CD4-positive, alpha-beta memory T cell (primary cell): ENCODE measurements at regions of chr1 and their contacts with region 1.

Region 1: GRCh38 chr1:84781946-84782771 is 91.9 kb upstream of the SSX2IP start:
- DNase-seq: peak; percentile 71 to 78 (median 75)
- H3K4me3 ChIP-seq: peak overlapping the region in 1 of 2 donors; percentile 28
- H3K4me3 Mint-ChIP-seq: peak overlapping the region; percentile 77 to 93 (median 87)
- H3K27ac ChIP-seq: no peak overlapping the region
- H3K27ac Mint-ChIP-seq: peak overlapping the region in 5 of 7 donors; percentile 7 to 82 (median 28)
- H3K4me1 ChIP-seq: peaks cover 9% of the 10 kb centered on the region
- H3K4me1 Mint-ChIP-seq: peaks cover 8 to 32% (median 22%) of the 10 kb centered on the region in 4 donors
- H3K27me3 ChIP-seq: no peaks in the 10 kb centered on the region
- H3K27me3 Mint-ChIP-seq: peaks cover 0 to 2% of the 10 kb centered on the region in 2 donors

Region 2: GRCh38 chr1:84758968-84759491 is 23.1 kb before region 1 on chr1:
- CTCF ChIA-PET with region 1: interaction called, 14 read pairs
- POLR2A ChIA-PET with region 1: no interaction called
- intact Hi-C with region 1: no loop called
- DNase-seq: no peak
- H3K4me3 ChIP-seq: no peak overlapping the region
- H3K4me3 Mint-ChIP-seq: peak overlapping the region in 5 of 8 donors; percentile 25 to 81 (median 55)
- H3K27ac ChIP-seq: no peak overlapping the region
- H3K27ac Mint-ChIP-seq: no peak overlapping the region
- H3K4me1 ChIP-seq: no peaks in the 10 kb centered on the region
- H3K4me1 Mint-ChIP-seq: peaks cover 2 to 12% (median 5%) of the 10 kb centered on the region in 4 donors
- H3K27me3 ChIP-seq: no peaks in the 10 kb centered on the region
- H3K27me3 Mint-ChIP-seq: peaks cover 6 to 9% of the 10 kb centered on the region in 2 donors

Region 3: DNA sequence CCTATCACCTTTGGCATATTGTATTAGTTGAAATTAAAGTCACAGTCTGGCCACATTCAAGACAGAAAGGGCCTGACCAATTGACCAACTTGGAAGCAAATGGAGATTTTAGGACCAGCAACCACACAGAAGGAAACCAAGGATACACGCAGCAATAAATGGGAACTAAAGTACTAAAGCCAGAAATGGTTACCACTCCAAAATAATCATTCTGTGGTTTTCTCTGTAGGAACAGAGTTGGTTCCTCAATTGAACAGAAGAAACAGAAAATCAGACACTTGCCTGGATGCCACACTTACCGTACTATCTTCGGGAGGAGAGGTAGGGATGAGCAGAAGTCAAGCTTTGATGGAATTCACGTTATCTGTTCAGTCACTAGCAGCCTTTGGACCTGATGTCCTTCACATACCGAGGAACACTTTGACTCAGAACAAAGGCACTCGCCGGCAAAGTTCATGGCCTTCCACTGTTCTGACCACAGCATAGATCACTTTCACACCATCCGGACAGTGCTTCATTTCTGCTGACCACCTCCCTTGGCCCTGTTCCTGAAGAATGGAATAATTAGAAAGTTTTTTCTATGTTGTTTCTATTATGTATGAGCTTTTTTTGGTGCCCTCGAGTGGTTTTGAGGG is 13.9 kb after region 1 on chr1:
- CTCF ChIA-PET with region 1: interaction called, 19 read pairs
- POLR2A ChIA-PET with region 1: no interaction called
- intact Hi-C with region 1: no loop called
- DNase-seq: no peak
- H3K4me3 ChIP-seq: no peak overlapping the region
- H3K4me3 Mint-ChIP-seq: no peak overlapping the region
- H3K27ac ChIP-seq: no peak overlapping the region
- H3K27ac Mint-ChIP-seq: no peak overlapping the region
- H3K4me1 ChIP-seq: no peaks in the 10 kb centered on the region
- H3K4me1 Mint-ChIP-seq: no peaks in the 10 kb centered on the region
- H3K27me3 ChIP-seq: no peaks in the 10 kb centered on the region
- H3K27me3 Mint-ChIP-seq: peaks cover 0 to 6% of the 10 kb centered on the region in 2 donors

Region 4: GRCh38 chr1:84803604-84804003 is 21.4 kb after region 1 on chr1:
- CTCF ChIA-PET with region 1: interaction called, 13 read pairs
- POLR2A ChIA-PET with region 1: no interaction called
- intact Hi-C with region 1: no loop called
- DNase-seq: no peak
- H3K4me3 ChIP-seq: no peak overlapping the region
- H3K4me3 Mint-ChIP-seq: no peak overlapping the region
- H3K27ac ChIP-seq: no peak overlapping the region
- H3K27ac Mint-ChIP-seq: no peak overlapping the region
- H3K4me1 ChIP-seq: no peaks in the 10 kb centered on the region
- H3K4me1 Mint-ChIP-seq: peaks cover 0 to 1% (median 0%) of the 10 kb centered on the region in 4 donors
- H3K27me3 ChIP-seq: no peaks in the 10 kb centered on the region
- H3K27me3 Mint-ChIP-seq: peaks cover 3 to 7% of the 10 kb centered on the region in 2 donors

Region 5: DNA sequence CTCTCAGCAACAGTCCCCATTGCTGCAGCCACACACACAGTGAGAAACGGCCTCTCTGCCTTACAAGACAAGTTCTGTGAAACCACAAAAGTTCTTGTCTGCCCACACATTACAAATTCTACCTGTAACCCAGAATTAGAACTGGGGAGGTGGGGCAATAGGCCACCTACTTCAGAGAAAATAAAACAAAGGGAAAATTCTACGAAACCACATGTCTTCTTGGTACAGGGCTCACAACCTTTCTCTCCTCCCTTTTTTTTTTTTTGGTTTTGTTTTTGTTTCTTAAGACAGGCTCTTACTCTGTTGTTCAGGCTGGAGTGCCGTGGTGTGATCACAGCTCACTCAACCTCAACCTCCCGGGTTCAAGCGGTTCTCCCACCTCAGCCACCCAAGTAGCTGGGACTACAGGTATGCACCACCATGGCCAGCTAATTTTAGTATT is 80.7 kb after region 1 on chr1:
- CTCF ChIA-PET with region 1: no interaction called
- POLR2A ChIA-PET with region 1: no interaction called
- intact Hi-C with region 1: loop called (anchors 5 kb)
- DNase-seq: peak; percentile 66 to 78 (median 76)
- H3K4me3 ChIP-seq: peak overlapping the region in 1 of 2 donors; percentile 23
- H3K4me3 Mint-ChIP-seq: peak overlapping the region; percentile 75 to 89 (median 82)
- H3K27ac ChIP-seq: peak overlapping the region; percentile 40
- H3K27ac Mint-ChIP-seq: peak overlapping the region; percentile 79 to 94 (median 91)
- H3K4me1 ChIP-seq: peaks cover 33% of the 10 kb centered on the region
- H3K4me1 Mint-ChIP-seq: peaks cover 28 to 57% (median 43%) of the 10 kb centered on the region in 4 donors
- H3K27me3 ChIP-seq: no peaks in the 10 kb centered on the region
- H3K27me3 Mint-ChIP-seq: peaks cover 0 to 1% of the 10 kb centered on the region in 2 donors

Region 6: GRCh38 chr1:84936116-84936810 is 154.1 kb after region 1 on chr1:
- CTCF ChIA-PET with region 1: interaction called, 11 read pairs
- POLR2A ChIA-PET with region 1: no interaction called
- intact Hi-C with region 1: loop called (anchors 1 kb)
- DNase-seq: peak in 4 of 5 donors; percentile 52 to 62 (median 60)
- H3K4me3 ChIP-seq: no peak overlapping the region
- H3K4me3 Mint-ChIP-seq: no peak overlapping the region
- H3K27ac ChIP-seq: no peak overlapping the region
- H3K27ac Mint-ChIP-seq: no peak overlapping the region
- H3K4me1 ChIP-seq: peaks cover 3% of the 10 kb centered on the region
- H3K4me1 Mint-ChIP-seq: peaks cover 0 to 5% (median 2%) of the 10 kb centered on the region in 4 donors
- H3K27me3 ChIP-seq: no peaks in the 10 kb centered on the region
- H3K27me3 Mint-ChIP-seq: no peaks in the 10 kb centered on the region